Caco-2 (cell line): ENCODE measurements at regions of chr3 and their contacts with region 1.

Region 1: GRCh38 chr3:33980252-33980651 is 181.8 kb downstream of the PDCD6IP start:
- DNase-seq: peak in 1 of 2 experiments; percentile 41
- H3K4me3 ChIP-seq: no peak overlapping the region
- H3K4me3 Mint-ChIP-seq: no peak overlapping the region
- H3K27ac Mint-ChIP-seq: no peak overlapping the region
- H3K4me1 ChIP-seq: no peaks in the 10 kb centered on the region
- H3K4me1 Mint-ChIP-seq: no peaks in the 10 kb centered on the region
- H3K27me3 ChIP-seq: no peaks in the 10 kb centered on the region
- H3K27me3 Mint-ChIP-seq: no peaks in the 10 kb centered on the region
- CTCF ChIP-seq: peak; percentile 72 to 73

Region 2: DNA sequence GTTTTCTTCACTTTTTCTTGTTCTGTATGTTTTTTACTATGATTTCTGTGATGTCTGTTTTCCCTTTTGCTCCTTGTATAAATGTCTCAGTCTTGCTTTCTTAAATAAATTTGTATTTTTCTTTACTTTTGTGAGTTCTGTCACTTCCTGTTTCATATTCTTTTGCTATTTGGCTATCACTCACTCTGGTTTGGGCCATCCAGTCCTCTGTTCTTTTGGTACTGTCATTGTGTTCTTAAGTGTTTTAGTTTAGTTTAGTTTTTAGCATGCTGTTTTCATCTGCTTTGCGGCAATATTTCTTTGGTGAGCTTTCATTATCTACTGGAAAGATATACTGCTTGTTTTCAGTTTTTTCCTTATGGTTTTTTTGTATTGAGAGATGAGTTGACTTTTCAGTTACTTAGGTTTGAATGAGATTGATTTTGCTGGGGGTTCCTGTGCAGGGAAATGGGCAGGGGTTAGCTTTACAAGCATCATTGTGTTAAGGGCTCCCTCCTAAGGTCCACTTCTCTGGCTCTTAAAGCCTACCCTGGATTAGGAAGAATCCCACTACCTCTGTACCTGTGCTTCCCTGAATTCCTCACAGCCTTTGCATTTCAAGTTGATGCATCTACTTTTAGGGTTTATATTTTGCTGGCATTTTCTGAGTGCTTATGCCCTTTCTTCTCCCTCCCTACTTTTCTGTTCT is 146.7 kb before region 1 on chr3:
- CTCF ChIA-PET with region 1: no interaction called
- POLR2A ChIA-PET with region 1: no interaction called
- intact Hi-C with region 1: no loop called
- DNase-seq: no peak
- H3K4me3 ChIP-seq: no peak overlapping the region
- H3K4me3 Mint-ChIP-seq: no peak overlapping the region
- H3K27ac Mint-ChIP-seq: no peak overlapping the region
- H3K4me1 ChIP-seq: no peaks in the 10 kb centered on the region
- H3K4me1 Mint-ChIP-seq: no peaks in the 10 kb centered on the region
- H3K27me3 ChIP-seq: no peaks in the 10 kb centered on the region
- H3K27me3 Mint-ChIP-seq: no peaks in the 10 kb centered on the region
- CTCF ChIP-seq: no peak

Region 3: DNA sequence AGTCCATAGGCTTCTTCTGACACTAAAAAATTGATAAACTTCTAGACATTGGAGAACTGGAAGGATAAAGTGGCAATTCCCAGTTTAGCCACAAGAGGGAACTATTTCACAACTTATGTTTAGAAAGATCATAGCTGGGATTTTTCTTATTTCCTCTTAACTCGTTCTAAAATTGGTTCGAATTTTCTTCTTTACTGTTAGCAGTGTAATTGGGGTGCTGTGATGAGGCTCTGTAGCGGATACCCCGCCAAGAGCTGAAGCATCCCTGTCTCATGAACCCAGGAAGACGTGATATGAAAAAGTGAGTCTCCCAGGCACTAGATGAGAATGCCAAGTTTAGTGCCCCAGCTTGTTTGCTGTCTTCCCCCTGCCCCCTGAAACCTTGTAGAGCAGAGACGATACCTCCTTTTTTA is 96.7 kb before region 1 on chr3:
- CTCF ChIA-PET with region 1: interaction called, 11 read pairs
- POLR2A ChIA-PET with region 1: no interaction called
- intact Hi-C with region 1: loop called (anchors 1 kb)
- DNase-seq: peak in 1 of 2 experiments; percentile 48
- H3K4me3 ChIP-seq: no peak overlapping the region
- H3K4me3 Mint-ChIP-seq: no peak overlapping the region
- H3K27ac Mint-ChIP-seq: no peak overlapping the region
- H3K4me1 ChIP-seq: no peaks in the 10 kb centered on the region
- H3K4me1 Mint-ChIP-seq: no peaks in the 10 kb centered on the region
- H3K27me3 ChIP-seq: no peaks in the 10 kb centered on the region; the same call in 1 of the 2 replicates
- H3K27me3 Mint-ChIP-seq: peaks cover 9% of the 10 kb centered on the region
- CTCF ChIP-seq: peak; percentile 58 to 72

Region 4: DNA sequence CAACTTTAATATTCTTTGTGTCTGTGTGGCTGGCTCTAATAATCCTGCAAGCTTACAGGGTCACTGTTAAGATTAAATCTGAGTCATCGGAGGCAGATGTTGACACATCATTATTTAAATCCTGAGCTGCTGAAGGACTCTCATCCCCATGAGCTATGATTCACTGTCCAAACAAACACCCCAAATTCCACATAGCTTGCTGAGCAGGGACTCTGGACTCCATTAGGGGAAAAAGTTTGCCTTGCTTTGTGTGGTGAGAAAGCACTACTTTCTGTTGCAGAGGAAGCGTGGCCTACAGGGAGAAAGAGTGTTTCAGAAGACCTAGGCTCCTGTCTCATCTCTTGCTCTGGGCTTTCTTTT is 31.8 kb after region 1 on chr3:
- CTCF ChIA-PET with region 1: interaction called, 13 read pairs
- POLR2A ChIA-PET with region 1: no interaction called
- intact Hi-C with region 1: loop called (anchors 1 kb)
- DNase-seq: peak; percentile 78 to 82
- H3K4me3 ChIP-seq: no peak overlapping the region
- H3K4me3 Mint-ChIP-seq: no peak overlapping the region
- H3K27ac Mint-ChIP-seq: peak overlapping the region; percentile 67
- H3K4me1 ChIP-seq: peaks cover 49% of the 10 kb centered on the region
- H3K4me1 Mint-ChIP-seq: peaks cover 35% of the 10 kb centered on the region
- H3K27me3 ChIP-seq: no peaks in the 10 kb centered on the region
- H3K27me3 Mint-ChIP-seq: no peaks in the 10 kb centered on the region
- CTCF ChIP-seq: no peak

Region 5: GRCh38 chr3:34035775-34036413 is 55.6 kb after region 1 on chr3:
- CTCF ChIA-PET with region 1: no interaction called
- POLR2A ChIA-PET with region 1: no interaction called
- intact Hi-C with region 1: no loop called
- DNase-seq: no peak
- H3K4me3 ChIP-seq: no peak overlapping the region
- H3K4me3 Mint-ChIP-seq: no peak overlapping the region
- H3K27ac Mint-ChIP-seq: no peak overlapping the region
- H3K4me1 ChIP-seq: no peaks in the 10 kb centered on the region
- H3K4me1 Mint-ChIP-seq: no peaks in the 10 kb centered on the region
- H3K27me3 ChIP-seq: no peaks in the 10 kb centered on the region
- H3K27me3 Mint-ChIP-seq: no peaks in the 10 kb centered on the region
- CTCF ChIP-seq: no peak

Region 6: GRCh38 chr3:34077417-34078195 is 97.4 kb after region 1 on chr3:
- CTCF ChIA-PET with region 1: no interaction called
- POLR2A ChIA-PET with region 1: no interaction called
- intact Hi-C with region 1: no loop called
- DNase-seq: no peak
- H3K4me3 ChIP-seq: no peak overlapping the region
- H3K4me3 Mint-ChIP-seq: no peak overlapping the region
- H3K27ac Mint-ChIP-seq: no peak overlapping the region
- H3K4me1 ChIP-seq: no peaks in the 10 kb centered on the region
- H3K4me1 Mint-ChIP-seq: no peaks in the 10 kb centered on the region
- H3K27me3 ChIP-seq: no peaks in the 10 kb centered on the region
- H3K27me3 Mint-ChIP-seq: no peaks in the 10 kb centered on the region
- CTCF ChIP-seq: no peak

Region 7: DNA sequence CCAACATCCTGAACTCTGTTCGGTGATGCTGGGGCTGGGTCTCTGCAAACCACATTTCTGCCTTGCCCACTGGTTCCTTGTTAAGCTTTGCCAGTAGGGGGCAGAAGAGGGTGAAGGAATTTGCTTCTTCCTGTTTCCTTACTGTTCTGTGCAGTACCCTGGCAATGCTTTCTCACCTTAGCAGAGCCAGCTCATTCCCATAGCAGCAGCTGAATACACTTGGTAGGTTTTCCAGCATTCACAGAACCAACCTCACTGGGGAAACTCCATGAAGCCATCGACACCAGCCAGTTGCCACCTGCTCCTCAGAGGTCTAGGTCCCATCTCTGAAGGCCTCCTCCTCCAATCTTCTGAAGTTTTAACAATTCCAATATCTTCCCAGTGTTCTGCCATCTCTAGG is 126.6 kb after region 1 on chr3:
- CTCF ChIA-PET with region 1: no interaction called
- POLR2A ChIA-PET with region 1: no interaction called
- intact Hi-C with region 1: loop called (anchors 10 kb)
- DNase-seq: peak in 1 of 2 experiments; percentile 38
- H3K4me3 ChIP-seq: no peak overlapping the region
- H3K4me3 Mint-ChIP-seq: no peak overlapping the region
- H3K27ac Mint-ChIP-seq: no peak overlapping the region
- H3K4me1 ChIP-seq: no peaks in the 10 kb centered on the region
- H3K4me1 Mint-ChIP-seq: no peaks in the 10 kb centered on the region
- H3K27me3 ChIP-seq: no peaks in the 10 kb centered on the region; the same call in 1 of the 2 replicates
- H3K27me3 Mint-ChIP-seq: peaks cover 11% of the 10 kb centered on the region
- CTCF ChIP-seq: peak in 1 of 2 experiments; percentile 56

Region 8: GRCh38 chr3:34155666-34156065 is 175.4 kb after region 1 on chr3:
- CTCF ChIA-PET with region 1: no interaction called
- POLR2A ChIA-PET with region 1: no interaction called
- intact Hi-C with region 1: loop called (anchors 10 kb)
- DNase-seq: no peak
- H3K4me3 ChIP-seq: no peak overlapping the region
- H3K4me3 Mint-ChIP-seq: no peak overlapping the region
- H3K27ac Mint-ChIP-seq: no peak overlapping the region
- H3K4me1 ChIP-seq: no peaks in the 10 kb centered on the region
- H3K4me1 Mint-ChIP-seq: no peaks in the 10 kb centered on the region
- H3K27me3 ChIP-seq: no peaks in the 10 kb centered on the region
- H3K27me3 Mint-ChIP-seq: peaks cover 6% of the 10 kb centered on the region
- CTCF ChIP-seq: no peak

Region 9: DNA sequence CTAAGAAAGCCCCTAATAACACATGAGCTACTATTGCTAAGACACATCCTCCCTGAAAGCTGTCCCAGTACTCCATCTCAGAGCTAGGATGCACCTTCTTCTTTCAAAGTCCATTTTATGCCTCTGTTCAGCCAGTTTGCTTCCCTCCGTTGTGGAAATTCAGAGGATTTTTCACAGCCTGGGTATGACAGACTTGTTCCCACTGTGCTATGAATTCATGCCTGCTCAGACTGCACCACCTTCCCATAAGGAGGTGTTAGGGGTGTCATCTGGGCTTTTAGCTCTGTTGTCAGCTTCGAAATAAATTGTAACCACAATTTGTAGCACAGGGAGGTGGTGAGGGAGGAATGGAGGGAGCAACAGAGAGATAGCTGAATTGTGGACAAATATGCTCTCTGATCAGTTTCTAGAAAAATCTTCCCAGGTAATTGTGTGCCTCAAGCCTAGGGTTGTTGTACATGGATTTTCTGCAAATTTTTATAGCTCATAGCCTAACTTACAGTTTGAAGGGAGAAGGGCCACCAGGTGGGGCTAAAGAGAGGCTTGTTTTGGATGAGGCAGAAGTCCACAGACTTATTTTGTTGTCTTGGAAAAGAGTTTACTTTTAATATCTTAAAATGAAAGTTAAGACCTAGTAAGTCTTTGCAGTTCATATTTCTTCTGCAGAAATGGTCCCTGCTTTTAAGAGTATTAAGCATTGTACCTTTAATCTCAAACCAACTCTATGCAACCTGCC is 280.2 kb after region 1 on chr3:
- CTCF ChIA-PET with region 1: interaction called, 8 read pairs
- POLR2A ChIA-PET with region 1: no interaction called
- intact Hi-C with region 1: loop called (anchors 10 kb)
- DNase-seq: peak; percentile 45 to 63
- H3K4me3 ChIP-seq: no peak overlapping the region
- H3K4me3 Mint-ChIP-seq: no peak overlapping the region
- H3K27ac Mint-ChIP-seq: no peak overlapping the region
- H3K4me1 ChIP-seq: no peaks in the 10 kb centered on the region
- H3K4me1 Mint-ChIP-seq: peaks cover 7% of the 10 kb centered on the region
- H3K27me3 ChIP-seq: no peaks in the 10 kb centered on the region
- H3K27me3 Mint-ChIP-seq: peaks cover 4% of the 10 kb centered on the region
- CTCF ChIP-seq: peak; percentile 51 to 74

Region 10: GRCh38 chr3:34683851-34684250 is 703.6 kb after region 1 on chr3:
- CTCF ChIA-PET with region 1: interaction called, 10 read pairs
- POLR2A ChIA-PET with region 1: no interaction called
- intact Hi-C with region 1: loop called (anchors 1 kb)
- DNase-seq: peak; percentile 65 to 75
- H3K4me3 ChIP-seq: no peak overlapping the region
- H3K4me3 Mint-ChIP-seq: no peak overlapping the region
- H3K27ac Mint-ChIP-seq: no peak overlapping the region
- H3K4me1 ChIP-seq: peaks cover 8% of the 10 kb centered on the region
- H3K4me1 Mint-ChIP-seq: no peaks in the 10 kb centered on the region
- H3K27me3 ChIP-seq: no peaks in the 10 kb centered on the region
- H3K27me3 Mint-ChIP-seq: no peaks in the 10 kb centered on the region
- CTCF ChIP-seq: peak; percentile 66 to 76